Gastrocnemius medialis (tissue), 4 donors: ENCODE measurements at regions of chr9 and their contacts with region 1.

Region 1: GRCh38 chr9:71806901-71807307 is 38.6 kb upstream of the CEMIP2 start:
- DNase-seq: peak; percentile 43 to 63
- ATAC-seq: peak; percentile 97 to 98
- H3K4me3 ChIP-seq: no peak overlapping the region
- H3K27ac ChIP-seq: peak overlapping the region in 1 of 4 donors; percentile 34
- H3K4me1 ChIP-seq: peaks cover 7 to 20% of the 10 kb centered on the region in 2 donors
- H3K27me3 ChIP-seq: no peaks in the 10 kb centered on the region
- CTCF ChIP-seq: peak; percentile 68 to 93 (median 87)
- POLR2A ChIP-seq: no peak

Region 2: DNA sequence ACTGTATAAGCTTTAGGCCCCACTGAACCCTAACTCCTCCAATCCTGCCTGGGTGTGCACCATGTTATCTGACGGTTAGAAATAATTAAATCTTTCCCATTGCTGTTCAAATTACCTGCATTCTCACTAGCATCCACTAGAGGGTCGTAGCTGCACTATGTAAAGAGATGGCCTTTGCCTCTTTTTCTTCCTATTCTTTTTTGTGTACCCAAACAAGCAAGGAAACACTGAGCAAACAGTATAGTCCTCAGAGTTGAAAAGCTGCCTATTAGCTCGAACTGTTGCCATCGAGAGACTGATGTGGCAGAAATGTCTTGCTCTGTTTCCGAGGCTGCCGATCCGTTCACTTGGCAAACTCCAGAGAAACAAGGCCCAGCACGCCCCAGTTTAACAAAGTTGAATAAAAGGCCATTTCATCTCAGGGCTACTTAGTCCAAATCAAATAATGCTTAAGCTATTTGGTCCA is 521.7 kb before region 1 on chr9:
- in situ Hi-C with region 1: loop called in 2 of 4 experiments (anchors 25 kb)
- intact Hi-C with region 1: no loop called
- DNase-seq: no peak
- ATAC-seq: peak; percentile 70 to 83
- H3K4me3 ChIP-seq: no peak overlapping the region
- H3K27ac ChIP-seq: no peak overlapping the region
- H3K4me1 ChIP-seq: peaks cover 0 to 5% of the 10 kb centered on the region in 2 donors
- H3K27me3 ChIP-seq: no peaks in the 10 kb centered on the region
- CTCF ChIP-seq: peak; percentile 60 to 81 (median 68)
- POLR2A ChIP-seq: no peak

Region 3: GRCh38 chr9:71308454-71308853 is 498.4 kb before region 1 on chr9:
- in situ Hi-C with region 1: no loop called
- intact Hi-C with region 1: no loop called
- DNase-seq: no peak
- ATAC-seq: no peak
- H3K4me3 ChIP-seq: no peak overlapping the region
- H3K27ac ChIP-seq: no peak overlapping the region
- H3K4me1 ChIP-seq: no peaks in the 10 kb centered on the region
- H3K27me3 ChIP-seq: no peaks in the 10 kb centered on the region
- CTCF ChIP-seq: no peak
- POLR2A ChIP-seq: no peak

Region 4: GRCh38 chr9:71911253-71912074 is 104.6 kb after region 1 on chr9 and contains the start of gene C9orf85:
- in situ Hi-C with region 1: no loop called
- intact Hi-C with region 1: loop called (anchors 5 kb)
- DNase-seq: peak; percentile 99
- ATAC-seq: peak; percentile 91 to 96
- H3K4me3 ChIP-seq: peak within 1 kb of the TSS; percentile 73 to 96 (median 87)
- H3K27ac ChIP-seq: peak within 1 kb of the TSS; percentile 88 to 96 (median 92)
- H3K4me1 ChIP-seq: peaks cover 43 to 58% of the 10 kb centered on the region in 2 donors
- H3K27me3 ChIP-seq: no peaks in the 10 kb centered on the region
- CTCF ChIP-seq: no peak
- POLR2A ChIP-seq: peak in 1 of 2 donors; percentile 69
- total RNA-seq, gene C9orf85: 1.7 to 9.6 (median 6.3) TPM

Region 5: GRCh38 chr9:71984403-71984802 is 177.5 kb after region 1 on chr9:
- in situ Hi-C with region 1: no loop called
- intact Hi-C with region 1: loop called (anchors 5 kb)
- DNase-seq: peak; percentile 89 to 91
- ATAC-seq: peak; percentile 94 to 100
- H3K4me3 ChIP-seq: no peak overlapping the region
- H3K27ac ChIP-seq: peak overlapping the region in 3 of 4 donors; percentile 16 to 42 (median 37)
- H3K4me1 ChIP-seq: peaks cover 23 to 27% of the 10 kb centered on the region in 2 donors
- H3K27me3 ChIP-seq: no peaks in the 10 kb centered on the region
- CTCF ChIP-seq: no peak
- POLR2A ChIP-seq: no peak

Region 6: DNA sequence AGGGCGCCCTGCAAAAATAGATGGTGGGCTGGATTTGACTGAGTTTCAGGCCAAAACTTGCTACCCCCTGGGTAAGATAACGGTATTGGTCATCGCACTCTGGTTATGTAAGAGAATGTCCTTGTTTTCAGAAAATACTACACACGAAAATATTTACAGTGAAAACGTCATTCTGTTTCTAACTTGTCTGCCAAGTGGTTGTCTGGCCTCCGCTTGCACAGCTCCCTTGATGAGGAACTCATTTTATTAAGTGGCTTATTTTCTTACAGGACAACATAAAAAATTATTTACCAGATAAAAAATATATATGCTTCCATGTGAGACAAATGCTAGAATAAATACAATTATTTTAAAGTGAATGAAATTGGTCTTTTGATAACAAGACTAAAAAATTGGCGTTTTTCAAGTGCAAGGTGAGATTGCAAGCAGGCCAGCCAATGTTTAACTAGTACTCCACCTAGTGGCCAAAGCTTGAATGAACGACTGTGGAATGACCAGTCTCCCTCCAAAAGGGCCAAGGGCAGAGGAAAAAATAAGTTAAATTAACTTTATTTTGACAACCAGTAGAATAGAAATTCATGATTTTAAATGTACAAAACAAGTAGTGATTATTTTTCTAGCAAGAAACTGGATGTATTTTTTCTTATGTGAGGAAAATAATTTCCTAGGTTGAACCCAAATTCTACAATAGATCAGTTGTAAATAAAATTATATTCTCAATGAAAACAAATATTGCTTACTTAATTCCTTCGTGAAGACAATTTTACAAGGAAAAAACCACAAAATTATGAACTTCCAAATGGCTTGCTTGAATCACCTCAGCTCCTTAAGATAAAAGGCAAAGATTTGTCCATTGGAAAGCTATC is 464.9 kb after region 1 on chr9:
- in situ Hi-C with region 1: loop called in 2 of 4 experiments (anchors 10 to 25 kb)
- intact Hi-C with region 1: no loop called
- DNase-seq: peak in 1 of 2 donors; percentile 15
- ATAC-seq: peak; percentile 69 to 73
- H3K4me3 ChIP-seq: no peak overlapping the region
- H3K27ac ChIP-seq: no peak overlapping the region
- H3K4me1 ChIP-seq: no peaks in the 10 kb centered on the region
- H3K27me3 ChIP-seq: no peaks in the 10 kb centered on the region
- CTCF ChIP-seq: peak; percentile 72 to 90 (median 75)
- POLR2A ChIP-seq: no peak